T-cell (primary cell): ENCODE measurements at regions of chr22 and their contacts with region 1.

Region 1: DNA sequence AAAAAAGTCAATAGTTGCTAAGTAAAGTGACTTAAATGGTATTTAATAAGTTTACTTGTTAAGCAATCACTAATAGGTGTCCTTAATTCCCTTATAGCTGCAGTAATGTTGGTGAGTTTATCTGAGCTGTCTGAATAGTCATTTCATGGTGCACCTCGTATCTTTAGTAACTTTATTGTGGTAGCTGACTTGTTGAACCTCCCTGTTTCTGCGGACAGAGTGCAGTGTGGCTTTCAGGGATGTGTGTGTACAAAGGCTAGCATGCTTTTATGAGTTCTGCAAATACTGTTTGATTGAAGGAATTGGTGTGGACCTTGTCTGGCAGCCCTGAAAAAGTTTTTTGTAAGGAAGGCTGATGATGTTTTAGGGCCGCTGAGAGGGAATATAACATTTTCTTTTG is 2.6 kb downstream of the ZNRF3 start:
- DNase-seq: no peak
- ATAC-seq: no peak
- H3K4me3 ChIP-seq: no peak overlapping the region
- H3K4me3 Mint-ChIP-seq: peak overlapping the region in 1 of 3 donors; percentile 40
- H3K27ac ChIP-seq: no peak overlapping the region
- H3K27ac Mint-ChIP-seq: no peak overlapping the region
- H3K4me1 ChIP-seq: peaks cover 4 to 17% of the 10 kb centered on the region in 2 experiments
- H3K4me1 Mint-ChIP-seq: peaks cover 25 to 32% (median 25%) of the 10 kb centered on the region in 3 donors
- H3K27me3 ChIP-seq: peaks cover 10 to 17% of the 10 kb centered on the region in 2 experiments
- H3K27me3 Mint-ChIP-seq: peaks cover 13 to 16% of the 10 kb centered on the region in 2 donors

Region 2: GRCh38 chr22:28855355-28856094 is 30.4 kb before region 1 on chr22:
- CTCF ChIA-PET with region 1: interaction called in 1 of 2 experiments, 10 read pairs
- POLR2A ChIA-PET with region 1: no interaction called
- DNase-seq: peak in 30 of 35 experiments; percentile 4 to 81 (median 20)
- ATAC-seq: peak in 2 of 4 experiments; percentile 44 to 50
- H3K4me3 ChIP-seq: no peak overlapping the region
- H3K4me3 Mint-ChIP-seq: no peak overlapping the region
- H3K27ac ChIP-seq: no peak overlapping the region
- H3K27ac Mint-ChIP-seq: no peak overlapping the region
- H3K4me1 ChIP-seq: no peaks in the 10 kb centered on the region
- H3K4me1 Mint-ChIP-seq: peaks cover 0 to 8% (median 0%) of the 10 kb centered on the region in 3 donors
- H3K27me3 ChIP-seq: peaks cover 0 to 3% of the 10 kb centered on the region in 2 experiments
- H3K27me3 Mint-ChIP-seq: peaks cover 2 to 14% of the 10 kb centered on the region in 2 donors

Region 3: GRCh38 chr22:28867191-28867590 is 18.7 kb before region 1 on chr22:
- CTCF ChIA-PET with region 1: no interaction called
- POLR2A ChIA-PET with region 1: no interaction called
- DNase-seq: no peak
- ATAC-seq: no peak
- H3K4me3 ChIP-seq: no peak overlapping the region
- H3K4me3 Mint-ChIP-seq: no peak overlapping the region
- H3K27ac ChIP-seq: no peak overlapping the region
- H3K27ac Mint-ChIP-seq: no peak overlapping the region
- H3K4me1 ChIP-seq: no peaks in the 10 kb centered on the region
- H3K4me1 Mint-ChIP-seq: no peaks in the 10 kb centered on the region
- H3K27me3 ChIP-seq: peaks cover 0 to 14% of the 10 kb centered on the region in 2 experiments
- H3K27me3 Mint-ChIP-seq: peaks cover 0 to 7% of the 10 kb centered on the region in 2 donors